GM13977 (cell line): ENCODE measurements at regions of chr5 and their contacts with region 1.

Region 1: GRCh38 chr5:76867827-76868693 is 18.2 kb downstream of the S100Z start:
- DNase-seq: peak; percentile 72
- CTCF ChIP-seq: peak; percentile 85

Region 2: DNA sequence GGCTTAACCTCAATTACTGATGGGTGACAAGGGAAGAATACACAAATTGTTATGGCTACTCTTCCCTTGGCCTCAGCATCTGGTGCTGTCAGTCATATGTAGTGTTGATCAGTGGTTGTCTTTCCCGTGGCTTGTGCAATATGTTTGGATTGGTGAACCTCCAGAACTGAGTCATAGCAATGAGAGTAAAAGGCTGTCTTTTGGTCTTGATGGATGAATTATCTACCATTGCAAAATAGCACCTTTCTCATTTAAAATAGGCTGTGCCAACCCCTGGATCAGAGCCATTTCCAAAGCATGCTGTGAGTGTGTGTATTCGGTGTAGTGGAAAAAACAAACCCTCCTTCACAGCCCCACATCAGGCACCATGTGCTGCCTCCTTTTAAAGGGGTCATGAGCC is 166.8 kb before region 1 on chr5:
- in situ Hi-C with region 1: no loop called
- DNase-seq: no peak
- CTCF ChIP-seq: no peak

Region 3: DNA sequence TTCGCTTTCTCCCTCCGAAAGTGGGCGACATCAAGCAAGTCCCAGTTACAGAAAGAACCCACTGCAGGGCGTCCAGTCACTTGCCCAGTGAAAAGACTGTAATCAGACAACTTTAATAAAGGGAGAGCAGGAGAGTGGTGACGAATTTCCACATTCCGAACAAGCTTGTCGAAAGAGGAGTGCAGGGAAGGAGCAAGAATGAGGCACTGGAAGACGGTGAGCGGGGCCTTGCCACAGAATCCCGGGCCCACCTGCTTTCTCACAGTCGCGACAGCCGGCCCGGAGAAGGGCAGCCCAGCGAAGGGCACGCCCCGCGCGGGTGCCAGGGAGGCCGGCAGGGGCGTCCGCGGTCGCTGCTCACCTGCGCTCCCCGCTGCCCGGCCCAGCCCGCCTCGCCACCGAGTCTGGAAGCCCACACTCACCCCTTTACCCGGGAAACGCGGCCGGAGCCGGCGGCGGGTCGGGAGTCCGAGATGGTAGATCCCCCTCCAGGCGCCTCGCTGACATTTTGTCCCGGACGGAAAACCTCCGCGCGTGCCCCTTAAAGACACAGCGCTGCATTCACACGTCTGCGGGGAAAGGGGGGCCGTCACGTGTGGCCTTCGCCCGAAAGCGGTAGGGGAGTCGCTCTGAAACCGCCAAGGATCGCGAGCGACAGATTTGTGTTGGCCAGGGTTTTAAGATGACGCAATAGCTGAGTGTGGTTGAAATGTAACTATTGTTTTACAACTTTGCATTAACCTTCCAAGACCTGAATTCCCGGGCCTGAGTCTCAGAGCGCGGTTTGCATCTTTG is 218.8 kb after region 1 on chr5 and contains the start of gene ZBED3:
- in situ Hi-C with region 1: loop called (anchors 10 kb)
- DNase-seq: peak; percentile 77
- CTCF ChIP-seq: peak; percentile 26